H1 (cell line): ENCODE measurements at regions of chr17 and their contacts with region 1.

Region 1: GRCh38 chr17:50816771-50817751 is 18.3 kb upstream of the WFIKKN2 start:
- DNase-seq: peak in 1 of 2 experiments; percentile 82
- H3K4me3 ChIP-seq: no peak overlapping the region
- H3K27ac ChIP-seq: no peak overlapping the region
- H3K4me1 ChIP-seq: peaks cover 0 to 5% (median 0%) of the 10 kb centered on the region in 4 experiments; a peak in 2 of 7 replicates
- H3K27me3 ChIP-seq: no peaks in the 10 kb centered on the region; a peak in 1 of 7 replicates
- CTCF ChIP-seq: peak; percentile 67 to 76 (median 68)
- EP300 ChIP-seq: no peak
- POLR2A ChIP-seq: no peak
- RAD21 ChIP-seq: peak; percentile 43 to 62

Region 2: GRCh38 chr17:50798424-50799288 is 18.4 kb before region 1 on chr17:
- CTCF ChIA-PET with region 1: interaction called, 12 read pairs
- POLR2A ChIA-PET with region 1: interaction called, 3 read pairs
- DNase-seq: no peak
- H3K4me3 ChIP-seq: no peak overlapping the region
- H3K27ac ChIP-seq: no peak overlapping the region
- H3K4me1 ChIP-seq: peaks cover 0 to 5% (median 2%) of the 10 kb centered on the region in 4 experiments; a peak in 4 of 7 replicates
- H3K27me3 ChIP-seq: no peaks in the 10 kb centered on the region
- CTCF ChIP-seq: no peak
- EP300 ChIP-seq: no peak
- POLR2A ChIP-seq: no peak
- RAD21 ChIP-seq: no peak

Region 3: DNA sequence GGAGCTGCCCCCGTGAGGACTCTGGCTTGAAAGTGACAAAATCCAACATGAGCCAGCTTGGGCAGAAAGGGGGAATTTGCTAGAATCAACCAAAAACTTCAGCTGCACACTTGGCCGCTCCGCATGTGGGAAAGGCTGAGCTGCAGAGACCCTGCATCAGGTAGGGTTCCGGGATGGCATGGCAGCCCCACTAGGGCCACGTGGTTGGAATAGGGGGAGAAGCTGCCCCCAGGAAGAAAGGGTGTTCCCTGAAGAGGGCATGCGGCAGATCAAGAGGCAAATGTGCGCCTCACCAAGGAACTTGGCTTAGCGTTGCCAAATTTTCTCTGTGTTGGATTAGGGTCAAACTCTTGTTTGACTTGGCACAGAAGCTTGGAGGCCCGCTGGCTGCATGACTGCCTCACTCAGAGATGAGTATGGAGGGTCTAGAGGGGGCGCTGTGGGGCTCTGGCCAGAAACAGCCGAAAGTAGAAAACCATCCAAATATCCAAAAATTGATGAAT is 10.9 kb before region 1 on chr17:
- CTCF ChIA-PET with region 1: interaction called, 32 read pairs
- POLR2A ChIA-PET with region 1: interaction called, 3 read pairs
- DNase-seq: peak in 1 of 2 experiments; percentile 68
- H3K4me3 ChIP-seq: no peak overlapping the region
- H3K27ac ChIP-seq: no peak overlapping the region
- H3K4me1 ChIP-seq: no peaks in the 10 kb centered on the region
- H3K27me3 ChIP-seq: no peaks in the 10 kb centered on the region
- CTCF ChIP-seq: peak; percentile 54 to 61 (median 58)
- EP300 ChIP-seq: no peak
- POLR2A ChIP-seq: no peak
- RAD21 ChIP-seq: peak; percentile 37 to 53; a peak in 3 of 4 replicates

Region 4: GRCh38 chr17:50834429-50835300 is 17.6 kb after region 1 on chr17:
- CTCF ChIA-PET with region 1: interaction called, 125 read pairs
- POLR2A ChIA-PET with region 1: interaction called, 3 read pairs
- DNase-seq: no peak
- H3K4me3 ChIP-seq: no peak overlapping the region
- H3K27ac ChIP-seq: no peak overlapping the region
- H3K4me1 ChIP-seq: peaks cover 0 to 31% (median 26%) of the 10 kb centered on the region in 4 experiments; a peak in 6 of 7 replicates
- H3K27me3 ChIP-seq: no peaks in the 10 kb centered on the region
- CTCF ChIP-seq: no peak
- EP300 ChIP-seq: no peak
- POLR2A ChIP-seq: no peak
- RAD21 ChIP-seq: no peak

Region 5: DNA sequence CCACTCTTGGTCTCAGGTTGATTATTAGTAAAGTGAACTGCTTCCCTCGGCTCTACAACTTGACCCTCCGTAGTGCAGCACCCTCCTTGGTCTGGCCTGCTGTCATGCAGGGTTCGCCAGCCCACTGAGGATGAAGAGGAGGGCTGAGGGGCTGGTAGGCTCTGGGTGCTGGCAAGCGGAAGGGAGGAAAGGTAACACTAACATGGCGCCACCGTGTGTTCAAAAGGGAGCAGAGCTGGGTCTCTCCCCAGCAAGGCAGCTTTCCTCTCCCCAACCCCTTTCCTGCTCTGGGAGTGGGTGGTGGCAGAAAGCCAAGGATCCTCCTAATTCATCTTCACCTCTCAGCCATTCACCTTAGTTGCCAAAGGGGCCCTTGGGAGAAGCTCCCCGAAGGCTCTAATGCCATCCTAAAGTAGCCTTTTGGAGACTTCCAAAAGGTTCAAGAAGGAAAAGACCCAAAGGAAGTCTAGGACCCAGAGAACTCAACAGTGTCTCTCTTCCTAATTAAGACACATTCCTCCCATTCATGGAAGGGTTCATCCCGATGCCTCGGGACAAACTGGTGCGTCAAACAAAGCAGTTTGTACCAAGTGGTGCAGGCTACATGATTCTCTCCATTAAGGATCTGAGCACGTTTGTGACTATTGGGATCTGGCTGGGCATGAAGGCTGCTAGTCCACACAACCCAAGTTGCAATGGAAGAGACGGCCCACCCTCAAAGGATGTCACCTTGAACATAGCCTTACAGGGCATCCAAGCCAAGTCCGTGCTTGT is 139.9 kb after region 1 on chr17:
- CTCF ChIA-PET with region 1: interaction called, 10 read pairs
- POLR2A ChIA-PET with region 1: no interaction called
- DNase-seq: peak in 1 of 2 experiments; percentile 81
- H3K4me3 ChIP-seq: no peak overlapping the region
- H3K27ac ChIP-seq: no peak overlapping the region
- H3K4me1 ChIP-seq: peaks cover 3 to 18% (median 10%) of the 10 kb centered on the region in 4 experiments
- H3K27me3 ChIP-seq: no peaks in the 10 kb centered on the region
- CTCF ChIP-seq: peak; percentile 81 to 96 (median 91)
- EP300 ChIP-seq: no peak
- POLR2A ChIP-seq: no peak
- RAD21 ChIP-seq: peak; percentile 85 to 89